ENCODE measurements at regions of chr9 and their contacts with region 1.

Region 1: DNA sequence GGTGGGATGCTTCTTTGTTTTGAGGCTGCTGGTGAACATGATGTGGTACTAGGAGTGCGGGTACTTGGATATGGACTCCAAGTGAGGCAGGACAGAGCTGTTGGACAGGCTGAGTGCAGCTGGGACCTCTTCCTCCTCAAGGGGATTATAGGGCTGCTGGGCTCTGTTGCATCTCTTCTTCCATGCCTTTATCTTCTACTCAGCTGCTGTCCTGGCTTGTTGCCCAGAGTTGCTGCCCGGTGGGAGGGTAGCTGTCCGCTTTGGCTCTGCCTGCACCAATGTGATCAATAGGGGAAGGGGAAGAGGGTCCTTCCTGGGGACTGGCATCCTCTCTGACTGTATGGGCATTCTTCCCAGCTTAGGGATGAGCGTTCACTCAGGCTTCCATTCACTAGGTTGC is 1217.9 kb upstream of the ACO1 start:
- DNase-seq: no peak
- H3K4me3 ChIP-seq: no peak overlapping the region
- H3K27ac ChIP-seq: no peak overlapping the region
- H3K4me1 ChIP-seq: peaks cover 27% of the 10 kb centered on the region
- H3K27me3 ChIP-seq: no peaks in the 10 kb centered on the region
- CTCF ChIP-seq: no peak

Region 2: GRCh38 chr9:31272456-31273295 is 106.2 kb after region 1 on chr9:
- CTCF ChIA-PET with region 1: no interaction called
- dilution Hi-C with region 1: no loop called
- in situ Hi-C with region 1: no loop called
- intact Hi-C with region 1: loop called (anchors 10 kb)
- DNase-seq: peak; percentile 93
- H3K4me3 ChIP-seq: no peak overlapping the region
- H3K27ac ChIP-seq: peak overlapping the region; percentile 74
- H3K4me1 ChIP-seq: peaks cover 10% of the 10 kb centered on the region
- H3K27me3 ChIP-seq: no peaks in the 10 kb centered on the region
- CTCF ChIP-seq: no peak

Measured in mammary epithelial cell (primary cell).